Activated naive CD4-positive, alpha-beta T cell treated with anti-CD3 and anti-CD28 coated beads for 36 hours (primary cell): ENCODE measurements at regions of chrX and their contacts with region 1.

Region 1: DNA sequence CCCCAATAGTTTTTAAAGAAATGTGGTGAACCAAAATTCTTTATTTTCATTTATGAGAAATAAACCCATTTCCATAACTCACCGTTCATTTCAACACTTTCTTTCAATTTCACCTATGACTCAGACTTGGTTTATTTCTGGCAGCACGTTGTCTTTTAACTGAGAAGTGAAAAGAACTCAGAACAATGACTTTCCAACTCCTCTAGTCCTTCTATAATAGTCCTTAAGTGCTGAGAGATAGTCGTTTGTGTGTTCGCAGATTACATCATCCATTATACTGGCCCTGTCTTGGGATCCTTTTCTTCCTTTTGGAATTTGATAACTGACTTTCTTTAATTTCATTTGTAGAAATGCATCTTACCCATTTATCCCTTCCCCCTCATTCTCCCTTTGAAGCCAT is 113.6 kb downstream of the GLUD2 start:
- DNase-seq: no peak
- H3K4me3 Mint-ChIP-seq: peak overlapping the region; percentile 16
- H3K27ac Mint-ChIP-seq: peak overlapping the region; percentile 82
- H3K4me1 Mint-ChIP-seq: peaks cover 45% of the 10 kb centered on the region
- H3K27me3 Mint-ChIP-seq: no peaks in the 10 kb centered on the region

Region 2: DNA sequence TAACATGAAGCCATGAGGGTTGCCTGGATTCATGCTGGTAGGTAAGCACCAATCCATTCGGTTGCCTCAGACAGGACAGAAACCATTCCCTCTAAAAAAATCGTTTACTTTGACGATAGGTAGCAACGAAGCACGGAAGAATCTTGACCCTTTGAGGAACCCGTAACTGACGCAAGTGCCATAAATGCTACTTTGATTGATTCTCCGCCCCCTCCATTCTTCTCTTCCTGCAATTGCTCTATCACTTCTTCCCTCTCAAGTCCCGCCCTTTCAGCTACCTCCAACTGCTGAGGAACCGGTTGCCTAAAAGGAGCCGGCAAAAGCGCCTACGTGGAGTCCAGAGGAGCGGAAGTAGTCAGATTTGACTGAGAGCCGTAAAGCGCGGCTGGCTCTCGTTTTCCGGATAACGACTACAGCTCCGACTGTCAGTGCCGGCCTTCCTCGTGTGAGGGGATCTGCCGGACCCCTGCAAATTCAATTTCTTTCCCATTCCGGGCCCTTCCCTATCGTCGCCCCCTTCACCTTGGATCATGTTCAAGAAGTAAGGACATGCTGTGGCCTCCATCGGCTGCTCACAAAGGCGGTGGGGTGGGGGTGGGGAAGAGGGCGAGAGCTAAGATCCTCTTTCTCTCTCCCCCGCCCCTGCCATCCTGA is 557.2 kb before region 1 on chrX and contains the start of gene MCTS1:
- CTCF ChIA-PET with region 1: no interaction called
- intact Hi-C with region 1: loop called (anchors 10 kb)
- DNase-seq: peak; percentile 86
- H3K4me3 Mint-ChIP-seq: peak within 1 kb of the TSS; percentile 95
- H3K27ac Mint-ChIP-seq: peak within 1 kb of the TSS; percentile 98
- H3K4me1 Mint-ChIP-seq: peaks cover 7% of the 10 kb centered on the region
- H3K27me3 Mint-ChIP-seq: no peaks in the 10 kb centered on the region
- total RNA-seq, gene MCTS1: 58.6 to 63.4 TPM

Region 3: GRCh38 chrX:120790118-120790517 is 370.9 kb before region 1 on chrX:
- CTCF ChIA-PET with region 1: interaction called, 5 read pairs
- intact Hi-C with region 1: loop called (anchors 5 kb)
- DNase-seq: peak; percentile 23
- H3K4me3 Mint-ChIP-seq: peak overlapping the region; percentile 43
- H3K27ac Mint-ChIP-seq: peak overlapping the region; percentile 83
- H3K4me1 Mint-ChIP-seq: peaks cover 19% of the 10 kb centered on the region
- H3K27me3 Mint-ChIP-seq: no peaks in the 10 kb centered on the region

Region 4: DNA sequence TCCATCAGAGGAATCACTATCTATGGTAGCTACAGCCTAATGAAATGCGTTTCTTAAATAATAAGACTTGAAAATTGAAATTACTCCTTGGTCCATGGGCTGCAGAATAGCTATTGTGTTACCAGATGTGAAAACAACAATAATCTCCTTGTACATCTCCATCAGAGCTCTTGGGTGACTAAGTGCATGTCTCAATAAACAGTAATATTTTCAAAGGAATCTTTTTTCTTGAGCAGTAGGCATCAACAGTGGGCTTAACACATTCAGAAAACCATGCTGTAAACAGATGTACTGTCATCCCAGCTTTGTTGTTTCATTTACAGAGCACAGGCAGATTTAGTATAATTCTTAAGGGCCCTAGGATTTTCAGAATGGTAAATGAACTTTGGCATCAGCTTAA is 46.3 kb before region 1 on chrX:
- CTCF ChIA-PET with region 1: no interaction called
- intact Hi-C with region 1: no loop called
- DNase-seq: no peak
- H3K4me3 Mint-ChIP-seq: no peak overlapping the region
- H3K27ac Mint-ChIP-seq: no peak overlapping the region
- H3K4me1 Mint-ChIP-seq: no peaks in the 10 kb centered on the region
- H3K27me3 Mint-ChIP-seq: no peaks in the 10 kb centered on the region

Region 5: DNA sequence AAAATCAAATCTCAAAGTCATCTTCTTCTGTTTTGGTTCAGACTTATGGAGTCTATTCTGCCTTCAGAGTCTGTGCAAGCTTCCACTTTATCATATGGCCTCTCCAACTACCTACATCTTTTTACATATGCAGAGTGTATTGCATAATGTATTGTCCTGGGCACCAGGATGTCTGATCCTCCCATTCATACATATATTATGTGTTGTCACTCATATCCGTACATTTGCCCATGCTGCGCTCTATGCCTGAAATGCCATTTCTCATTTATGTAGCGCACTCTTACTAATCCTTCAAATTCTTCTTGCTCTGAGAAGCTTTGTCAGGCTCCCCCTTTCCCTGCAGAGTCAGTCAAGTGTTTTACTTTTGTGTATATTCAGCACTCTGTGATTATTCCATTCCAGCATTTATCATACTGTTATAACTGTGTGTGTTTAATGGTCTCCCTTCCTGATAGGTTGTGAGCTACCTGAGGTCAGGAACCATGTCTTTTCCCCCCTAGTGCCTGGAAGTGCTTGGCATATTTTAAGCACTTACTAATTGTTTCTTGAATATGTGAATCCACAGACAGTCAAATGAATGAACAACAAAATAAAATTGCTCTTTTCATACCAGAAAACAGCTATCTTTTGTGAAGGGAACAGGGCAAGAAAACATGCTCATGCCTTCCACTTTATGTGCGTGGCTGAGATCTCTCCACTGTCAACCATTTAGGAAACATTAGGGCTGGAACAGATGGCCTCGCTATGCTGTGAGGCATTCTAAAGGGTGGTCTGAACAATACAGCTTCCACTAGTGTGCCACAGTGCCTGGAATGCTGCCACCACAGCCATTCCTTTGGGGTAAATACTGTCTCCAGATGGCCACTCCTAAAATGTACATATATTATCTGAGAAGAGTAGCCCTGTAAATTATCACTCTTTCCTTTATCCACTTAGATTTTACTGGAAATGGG is 31.8 kb before region 1 on chrX:
- CTCF ChIA-PET with region 1: no interaction called
- intact Hi-C with region 1: no loop called
- DNase-seq: no peak
- H3K4me3 Mint-ChIP-seq: no peak overlapping the region
- H3K27ac Mint-ChIP-seq: no peak overlapping the region
- H3K4me1 Mint-ChIP-seq: no peaks in the 10 kb centered on the region
- H3K27me3 Mint-ChIP-seq: no peaks in the 10 kb centered on the region

Region 6: GRCh38 chrX:121256647-121257046 is 95.7 kb after region 1 on chrX:
- CTCF ChIA-PET with region 1: no interaction called
- intact Hi-C with region 1: loop called (anchors 2 kb)
- DNase-seq: peak; percentile 14
- H3K4me3 Mint-ChIP-seq: no peak overlapping the region
- H3K27ac Mint-ChIP-seq: no peak overlapping the region
- H3K4me1 Mint-ChIP-seq: peaks cover 17% of the 10 kb centered on the region
- H3K27me3 Mint-ChIP-seq: no peaks in the 10 kb centered on the region